Dendritic cell treated with granulocyte-macrophage colony-stimulating factor and Interleukin-4, amounts not matched to agents 40 ng/mL and 50 ng/mL, for 4 days (primary cell): ENCODE measurements at regions of chr4 and their contacts with region 1.

Region 1: DNA sequence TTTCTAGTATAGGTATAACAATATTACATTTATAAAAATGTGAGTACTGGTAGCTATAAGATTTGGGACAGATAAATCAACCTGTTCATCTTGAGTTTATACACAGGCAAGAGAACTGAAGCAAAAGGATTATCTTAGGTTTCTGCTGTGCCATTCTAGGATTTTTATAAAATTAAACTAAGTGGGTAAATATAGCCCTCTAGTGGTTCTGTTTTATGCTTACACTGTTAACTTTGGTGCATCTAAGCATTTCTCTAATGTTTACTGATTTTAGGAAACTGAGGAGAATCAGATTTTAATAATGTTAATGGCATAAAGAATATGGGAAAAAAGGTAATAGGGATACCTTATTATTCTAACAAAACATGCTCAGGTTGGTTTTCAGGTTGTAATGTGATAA is 1.1 kb upstream of the RRH start:
- H3K4me3 Mint-ChIP-seq: no peak overlapping the region
- H3K27ac Mint-ChIP-seq: no peak overlapping the region
- H3K4me1 Mint-ChIP-seq: no peaks in the 10 kb centered on the region
- H3K27me3 Mint-ChIP-seq: no peaks in the 10 kb centered on the region

Region 2: DNA sequence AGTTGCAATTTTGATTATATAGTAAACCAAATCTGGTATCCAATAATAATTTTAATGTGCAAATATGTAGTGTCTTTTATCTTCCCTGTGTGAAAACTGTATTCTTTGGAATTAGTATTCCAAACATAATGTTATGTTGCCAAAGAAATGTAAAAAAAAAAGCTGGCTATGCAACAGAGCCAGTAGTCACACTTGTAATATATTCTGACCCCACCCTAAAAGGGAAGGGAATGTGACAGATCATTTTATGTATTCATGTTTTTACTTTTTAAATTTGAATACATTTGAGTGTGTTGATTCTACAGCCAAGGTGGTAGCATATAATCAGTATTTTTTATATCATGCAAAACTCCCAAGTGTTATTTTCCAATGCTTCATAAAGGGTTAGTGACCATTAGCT is 294.5 kb before region 1 on chr4:
- intact Hi-C with region 1: loop called (anchors 10 kb)
- H3K4me3 Mint-ChIP-seq: no peak overlapping the region
- H3K27ac Mint-ChIP-seq: no peak overlapping the region
- H3K4me1 Mint-ChIP-seq: no peaks in the 10 kb centered on the region
- H3K27me3 Mint-ChIP-seq: no peaks in the 10 kb centered on the region